Psoas muscle (tissue), 8 donors: ENCODE measurements at regions of chr21 and their contacts with region 1.

Region 1: DNA sequence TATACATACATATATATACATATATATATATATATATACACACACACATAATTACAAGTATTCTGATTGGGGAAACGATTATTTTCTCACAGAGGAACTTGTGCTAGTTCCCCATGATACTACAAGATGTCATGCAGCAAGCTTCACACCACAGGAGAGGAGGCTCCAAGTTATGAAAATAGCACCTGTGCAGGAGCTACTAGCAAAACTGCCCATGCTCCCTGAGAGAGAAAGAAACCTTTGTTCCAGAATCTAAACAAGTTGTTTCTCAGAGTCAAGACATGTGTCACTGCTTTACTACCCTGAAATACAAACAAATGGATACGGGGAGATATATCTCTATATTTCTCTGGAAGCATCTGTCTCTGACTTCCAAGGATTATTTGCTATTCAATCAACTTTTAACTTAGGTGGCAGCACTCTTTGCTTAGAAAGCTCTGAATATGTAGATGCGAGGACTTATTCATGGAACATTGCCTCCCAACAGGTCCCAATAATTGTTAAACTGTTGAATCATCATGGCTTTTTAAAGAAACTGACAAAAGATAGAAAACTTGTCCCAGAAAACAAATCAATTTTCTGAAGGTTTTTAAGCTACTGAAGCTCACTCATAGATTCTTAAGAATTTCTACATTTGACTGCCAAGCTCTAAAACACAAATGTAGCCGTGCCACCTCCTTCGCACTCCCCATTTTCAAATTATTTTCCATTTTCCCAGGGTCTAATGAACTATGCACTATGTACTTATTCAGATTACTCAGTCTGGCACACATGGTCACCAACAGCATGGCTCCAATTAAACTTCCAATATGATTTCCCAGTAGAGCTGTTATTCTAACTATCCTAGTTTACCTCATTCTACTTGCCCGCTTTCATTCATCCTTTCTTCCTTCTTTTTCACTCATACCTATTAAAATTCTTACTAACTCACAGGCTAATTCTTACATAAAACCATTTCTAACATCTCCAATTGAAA is 929.1 kb downstream of the LTN1 start:
- DNase-seq: no peak
- ATAC-seq: no peak
- H3K4me3 ChIP-seq: no peak overlapping the region
- H3K27ac ChIP-seq: no peak overlapping the region
- H3K4me1 ChIP-seq: peaks cover 5% of the 10 kb centered on the region
- H3K27me3 ChIP-seq: no peaks in the 10 kb centered on the region
- CTCF ChIP-seq: no peak

Region 2: GRCh38 chr21:28200726-28201125 is 137.2 kb after region 1 on chr21:
- intact Hi-C with region 1: no loop called
- DNase-seq: no peak
- ATAC-seq: no peak
- H3K4me3 ChIP-seq: no peak overlapping the region
- H3K27ac ChIP-seq: no peak overlapping the region
- H3K4me1 ChIP-seq: no peaks in the 10 kb centered on the region
- H3K27me3 ChIP-seq: no peaks in the 10 kb centered on the region
- CTCF ChIP-seq: no peak

Region 3: DNA sequence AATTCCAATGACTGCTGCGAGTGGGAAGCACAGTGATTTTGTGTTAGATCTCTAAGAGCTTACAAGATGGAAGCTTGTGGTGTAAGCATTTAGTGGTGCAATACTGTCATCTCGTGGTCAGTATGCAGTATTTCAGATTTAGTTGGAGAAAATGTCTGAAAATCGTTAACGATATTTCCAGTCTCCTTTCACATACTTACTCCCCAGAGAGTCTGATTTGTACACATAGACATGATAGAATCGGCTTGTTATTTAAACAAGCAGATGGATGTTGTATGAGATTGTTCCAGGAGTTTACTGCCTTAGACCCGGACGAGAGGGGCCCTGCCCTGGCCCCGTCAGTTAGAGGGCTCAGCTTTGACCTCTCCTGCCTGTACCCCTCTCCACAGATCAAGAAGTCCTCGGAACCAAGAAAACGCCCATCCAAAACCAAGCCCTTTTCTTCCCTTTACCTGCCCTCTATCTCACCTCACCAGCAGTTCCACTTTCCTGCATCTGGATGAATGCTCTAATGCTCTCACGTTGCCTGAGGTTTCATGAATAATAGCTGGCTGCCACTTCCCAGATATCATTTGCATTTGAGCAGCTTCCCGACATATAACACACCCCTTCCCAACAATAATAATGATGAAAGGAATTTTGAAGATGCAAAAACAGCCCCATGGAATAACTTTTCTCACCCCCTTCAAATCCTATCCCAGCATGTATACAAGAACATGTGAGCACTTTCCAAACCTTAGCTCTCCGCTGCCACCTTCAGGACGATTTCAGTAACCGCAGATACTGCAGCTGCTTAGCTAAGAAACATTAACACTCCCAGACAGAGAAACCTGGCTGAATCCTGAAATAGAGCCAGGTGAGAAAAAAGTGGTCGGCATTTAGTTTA is 681.8 kb after region 1 on chr21:
- intact Hi-C with region 1: loop called in 1 of 2 experiments (anchors 10 kb)
- DNase-seq: peak; percentile 62 to 71
- ATAC-seq: peak; percentile 90 to 97 (median 94)
- H3K4me3 ChIP-seq: peak overlapping the region; percentile 70
- H3K27ac ChIP-seq: peak overlapping the region; percentile 74
- H3K4me1 ChIP-seq: peaks cover 6% of the 10 kb centered on the region
- H3K27me3 ChIP-seq: no peaks in the 10 kb centered on the region
- CTCF ChIP-seq: peak; percentile 97